Transverse colon (tissue), 4 donors: ENCODE measurements at regions of chr5 and their contacts with region 1.

Region 1: DNA sequence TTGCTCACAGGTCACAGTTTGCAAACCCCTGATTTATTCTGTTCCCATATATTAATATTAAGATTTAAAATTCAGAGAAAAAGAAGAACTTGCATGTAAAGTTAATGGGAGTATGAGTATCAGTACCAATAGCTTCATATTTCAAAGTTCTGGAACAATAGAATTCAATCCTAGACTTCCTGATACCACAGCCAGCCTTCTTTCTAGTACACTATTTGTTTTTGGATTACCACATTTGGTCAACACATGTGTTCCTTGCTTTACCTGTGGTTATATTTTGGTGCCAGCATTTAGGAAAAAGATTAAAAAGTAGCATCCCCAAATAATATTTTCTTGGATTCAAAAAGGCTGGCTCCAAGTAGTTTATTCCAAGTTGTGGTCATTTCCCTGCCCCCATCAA is 49.5 kb downstream of the SPINK5 start:
- DNase-seq: no peak
- H3K4me3 ChIP-seq: no peak overlapping the region
- H3K27ac ChIP-seq: no peak overlapping the region
- H3K4me1 ChIP-seq: no peaks in the 10 kb centered on the region
- H3K27me3 ChIP-seq: no peaks in the 10 kb centered on the region
- CTCF ChIP-seq: no peak
- EP300 ChIP-seq: no peak
- POLR2A ChIP-seq: no peak

Region 2: DNA sequence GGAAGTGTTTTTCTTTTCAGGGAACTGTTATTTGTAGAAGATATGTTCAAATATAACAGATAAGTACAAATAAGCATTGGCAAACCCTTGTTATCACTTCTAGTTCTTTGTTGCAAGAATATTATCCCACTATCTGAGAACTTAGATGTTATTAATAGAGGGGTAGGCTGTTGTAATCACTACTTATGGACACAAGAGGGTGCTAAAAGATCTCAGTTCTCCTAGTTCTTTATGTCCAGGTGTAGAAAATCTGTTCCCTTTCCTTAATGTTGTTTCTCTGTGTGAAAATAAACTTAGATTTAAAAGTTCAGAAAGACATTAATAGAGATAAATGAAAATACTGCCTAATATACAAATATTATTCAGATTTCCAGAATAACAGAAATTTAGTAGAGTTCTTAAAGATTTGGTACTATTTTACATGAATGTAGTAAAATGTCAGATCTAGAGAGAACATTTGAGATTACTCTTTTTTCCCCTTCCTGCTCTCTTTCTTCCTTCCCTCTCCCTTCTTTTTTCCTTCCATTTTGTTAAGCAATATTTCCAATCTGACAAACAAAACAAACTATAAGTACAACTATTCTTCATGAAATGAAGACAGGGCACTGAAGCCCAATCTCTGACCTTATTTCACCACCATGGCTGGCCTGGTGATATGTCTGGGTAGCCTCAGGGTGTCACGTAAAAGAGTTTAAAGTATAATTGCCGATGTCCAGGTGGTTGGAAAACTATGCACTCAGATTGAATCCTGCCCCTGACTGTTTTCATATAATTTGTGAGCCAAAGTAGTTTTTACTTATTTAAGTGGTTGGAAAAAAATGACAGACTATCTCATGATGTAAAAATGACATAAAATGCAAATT is 163.3 kb before region 1 on chr5:
- in situ Hi-C with region 1: loop called in 3 of 4 experiments (anchors 10 kb)
- intact Hi-C with region 1: no loop called
- DNase-seq: no peak
- H3K4me3 ChIP-seq: no peak overlapping the region
- H3K27ac ChIP-seq: no peak overlapping the region
- H3K4me1 ChIP-seq: peaks cover 0 to 2% (median 0%) of the 10 kb centered on the region in 4 donors
- H3K27me3 ChIP-seq: no peaks in the 10 kb centered on the region
- CTCF ChIP-seq: peak; percentile 61 to 82 (median 70)
- EP300 ChIP-seq: no peak
- POLR2A ChIP-seq: no peak